ENCODE measurements at regions of chr10 and their contacts with region 1.

Region 1: GRCh38 chr10:88565072-88565471 is 18.0 kb downstream of the RNLS start:
- DNase-seq: peak; percentile 42
- H3K4me3 ChIP-seq: no peak overlapping the region
- H3K27ac ChIP-seq: no peak overlapping the region
- H3K4me1 ChIP-seq: no peaks in the 10 kb centered on the region
- H3K27me3 ChIP-seq: no peaks in the 10 kb centered on the region
- CTCF ChIP-seq: peak in 1 of 2 donors; percentile 11
- POLR2A ChIP-seq: no peak

Region 2: DNA sequence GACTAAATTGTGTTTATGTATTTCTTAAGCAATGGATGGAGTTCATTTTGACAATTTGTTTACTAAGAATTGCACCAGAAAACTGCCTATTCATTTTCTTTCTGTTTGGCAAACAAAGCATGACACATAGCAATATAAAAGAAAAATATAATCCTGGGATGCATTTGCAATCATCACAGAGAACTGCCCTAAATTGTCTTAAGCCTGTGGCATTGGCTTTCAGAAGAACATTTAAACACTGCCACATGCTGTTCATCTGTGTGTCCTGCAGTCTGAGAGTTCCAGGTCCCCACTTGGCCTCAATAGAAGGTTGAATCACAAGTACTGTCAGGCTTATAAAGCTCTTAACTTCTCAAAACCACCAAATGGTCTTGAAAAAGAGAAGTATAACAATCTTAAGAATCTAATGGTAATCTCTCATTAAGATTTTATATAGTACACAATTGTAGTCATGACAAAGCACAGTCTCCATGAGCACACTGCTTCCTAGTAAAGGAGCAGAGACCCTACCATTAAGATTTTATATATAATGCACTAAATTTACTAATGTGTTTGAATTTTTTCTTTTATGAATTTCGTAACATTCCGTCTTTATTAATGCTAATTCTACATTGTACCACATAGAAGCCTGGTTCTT is 11.8 kb before region 1 on chr10:
- CTCF ChIA-PET with region 1: interaction called, 20 read pairs
- POLR2A ChIA-PET with region 1: no interaction called
- dilution Hi-C with region 1: no loop called
- intact Hi-C with region 1: no loop called
- DNase-seq: peak; percentile 76
- H3K4me3 ChIP-seq: no peak overlapping the region
- H3K27ac ChIP-seq: no peak overlapping the region
- H3K4me1 ChIP-seq: no peaks in the 10 kb centered on the region
- H3K27me3 ChIP-seq: no peaks in the 10 kb centered on the region
- CTCF ChIP-seq: peak; percentile 63 to 64
- POLR2A ChIP-seq: no peak

Region 3: GRCh38 chr10:88680958-88681357 is 115.9 kb after region 1 on chr10:
- CTCF ChIA-PET with region 1: interaction called, 30 read pairs
- POLR2A ChIA-PET with region 1: no interaction called
- dilution Hi-C with region 1: no loop called
- intact Hi-C with region 1: no loop called
- DNase-seq: peak; percentile 42
- H3K4me3 ChIP-seq: no peak overlapping the region
- H3K27ac ChIP-seq: peak overlapping the region; percentile 45
- H3K4me1 ChIP-seq: peaks cover 9% of the 10 kb centered on the region
- H3K27me3 ChIP-seq: no peaks in the 10 kb centered on the region
- CTCF ChIP-seq: no peak
- POLR2A ChIP-seq: no peak

Region 4: GRCh38 chr10:88728107-88728763 is 163.2 kb after region 1 on chr10:
- CTCF ChIA-PET with region 1: interaction called, 20 read pairs
- POLR2A ChIA-PET with region 1: no interaction called
- dilution Hi-C with region 1: no loop called
- intact Hi-C with region 1: no loop called
- DNase-seq: peak; percentile 13
- H3K4me3 ChIP-seq: no peak overlapping the region
- H3K27ac ChIP-seq: no peak overlapping the region
- H3K4me1 ChIP-seq: no peaks in the 10 kb centered on the region
- H3K27me3 ChIP-seq: peaks cover 3 to 13% of the 10 kb centered on the region in 2 experiments
- CTCF ChIP-seq: peak; percentile 55 to 58
- POLR2A ChIP-seq: no peak

Region 5: DNA sequence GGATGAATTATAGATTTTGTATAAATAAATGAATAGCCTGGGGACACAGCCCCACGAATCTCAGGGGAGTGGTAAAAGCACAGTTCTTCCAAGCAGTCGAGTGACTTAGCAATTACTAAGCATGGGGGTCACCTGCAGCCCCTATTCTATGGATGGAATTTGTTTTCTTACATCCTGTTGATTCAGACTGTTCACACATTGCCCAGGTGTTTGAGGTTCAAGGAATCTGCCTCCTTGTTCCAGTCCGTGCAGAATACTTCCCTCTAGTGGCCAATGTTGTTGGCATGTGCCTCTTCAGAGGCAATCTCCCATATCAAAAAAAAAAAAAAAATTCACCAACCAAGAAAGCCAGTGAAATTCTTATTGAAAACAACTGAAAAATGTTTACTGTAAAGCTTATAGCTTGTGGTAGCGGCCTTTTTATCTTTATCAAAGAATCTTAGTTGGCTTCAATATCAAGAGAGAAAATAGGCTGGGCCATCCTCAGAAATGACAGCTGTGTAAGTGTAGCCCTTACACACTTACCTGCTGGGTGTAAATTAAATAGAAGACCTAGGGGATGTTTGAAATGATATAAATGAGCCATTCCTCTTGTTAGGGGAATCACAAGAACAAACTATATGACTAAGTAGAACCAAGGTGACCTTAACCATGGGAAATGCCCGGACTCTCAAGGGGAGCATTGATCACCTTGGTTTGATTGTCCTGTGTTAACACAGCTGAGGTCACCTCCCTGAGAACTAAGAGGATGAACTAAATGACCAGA is 245.3 kb after region 1 on chr10:
- CTCF ChIA-PET with region 1: interaction called, 164 read pairs
- POLR2A ChIA-PET with region 1: no interaction called
- dilution Hi-C with region 1: no loop called
- intact Hi-C with region 1: loop called (anchors 1 kb)
- DNase-seq: peak; percentile 64
- H3K4me3 ChIP-seq: no peak overlapping the region
- H3K27ac ChIP-seq: no peak overlapping the region
- H3K4me1 ChIP-seq: peaks cover 3% of the 10 kb centered on the region
- H3K27me3 ChIP-seq: no peaks in the 10 kb centered on the region
- CTCF ChIP-seq: peak; percentile 69 to 72
- POLR2A ChIP-seq: no peak

Region 6: DNA sequence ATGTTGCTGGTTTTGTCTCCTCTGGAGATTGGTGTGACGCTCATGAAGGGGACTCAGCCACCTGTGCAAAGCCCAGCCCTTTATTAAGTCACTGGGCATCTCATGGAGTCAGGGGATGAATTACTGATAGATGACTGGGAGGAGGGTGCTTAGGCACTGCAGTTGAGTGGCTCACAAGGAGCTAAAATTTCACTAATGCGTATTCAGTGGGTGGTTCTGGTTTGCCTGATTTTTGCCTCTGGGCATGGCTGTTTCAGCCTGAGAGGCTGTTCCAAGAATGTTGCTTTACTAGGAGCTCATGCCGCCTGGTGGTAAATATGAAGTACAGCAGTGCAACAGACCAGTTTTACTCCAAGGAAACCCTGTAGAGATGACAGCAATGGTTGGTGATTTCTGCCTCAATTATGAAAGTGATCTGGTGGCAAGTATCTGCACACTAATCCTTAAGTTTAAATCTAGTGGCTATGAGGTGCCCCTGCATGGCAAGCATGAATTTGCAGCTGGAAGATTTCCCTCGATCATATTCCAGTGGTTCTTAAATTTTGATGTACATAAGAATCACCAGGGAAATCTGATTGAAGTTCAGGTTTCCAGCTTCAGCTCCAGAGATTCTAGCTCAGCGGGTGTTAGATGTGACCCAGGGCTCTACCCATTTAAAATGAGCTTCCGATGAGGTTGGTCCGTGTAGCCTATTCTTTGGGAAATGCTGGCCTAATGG is 367.6 kb after region 1 on chr10:
- CTCF ChIA-PET with region 1: interaction called, 164 read pairs
- POLR2A ChIA-PET with region 1: no interaction called
- dilution Hi-C with region 1: no loop called
- intact Hi-C with region 1: loop called (anchors 1 kb)
- DNase-seq: peak; percentile 55
- H3K4me3 ChIP-seq: no peak overlapping the region
- H3K27ac ChIP-seq: no peak overlapping the region
- H3K4me1 ChIP-seq: peaks cover 4% of the 10 kb centered on the region
- H3K27me3 ChIP-seq: peaks cover 0 to 2% of the 10 kb centered on the region in 2 experiments
- CTCF ChIP-seq: peak; percentile 75 to 84
- POLR2A ChIP-seq: no peak

Measured in endothelial cell of umbilical vein (primary cell).